ENCODE measurements at regions of chr21 and their contacts with region 1.

Region 1: GRCh38 chr21:36156339-36156814 is 247 bp upstream of the DOP1B start:
- DNase-seq: peak; percentile 99 to 100 (median 100)
- ATAC-seq: peak; percentile 94
- H3K4me3 ChIP-seq: peak overlapping the region; percentile 81
- H3K4me3 Mint-ChIP-seq: peak overlapping the region; percentile 71 to 91 (median 86)
- H3K27ac ChIP-seq: peak overlapping the region; percentile 81
- H3K27ac Mint-ChIP-seq: peak overlapping the region in 8 of 9 donors; percentile 46 to 88 (median 58)
- H3K4me1 ChIP-seq: peaks cover 11% of the 10 kb centered on the region in 2 donors
- H3K4me1 Mint-ChIP-seq: peaks cover 11 to 45% (median 33%) of the 10 kb centered on the region in 7 donors
- H3K27me3 ChIP-seq: no peaks in the 10 kb centered on the region
- H3K27me3 Mint-ChIP-seq: peaks cover 0 to 13% (median 0%) of the 10 kb centered on the region in 5 donors

Region 2: DNA sequence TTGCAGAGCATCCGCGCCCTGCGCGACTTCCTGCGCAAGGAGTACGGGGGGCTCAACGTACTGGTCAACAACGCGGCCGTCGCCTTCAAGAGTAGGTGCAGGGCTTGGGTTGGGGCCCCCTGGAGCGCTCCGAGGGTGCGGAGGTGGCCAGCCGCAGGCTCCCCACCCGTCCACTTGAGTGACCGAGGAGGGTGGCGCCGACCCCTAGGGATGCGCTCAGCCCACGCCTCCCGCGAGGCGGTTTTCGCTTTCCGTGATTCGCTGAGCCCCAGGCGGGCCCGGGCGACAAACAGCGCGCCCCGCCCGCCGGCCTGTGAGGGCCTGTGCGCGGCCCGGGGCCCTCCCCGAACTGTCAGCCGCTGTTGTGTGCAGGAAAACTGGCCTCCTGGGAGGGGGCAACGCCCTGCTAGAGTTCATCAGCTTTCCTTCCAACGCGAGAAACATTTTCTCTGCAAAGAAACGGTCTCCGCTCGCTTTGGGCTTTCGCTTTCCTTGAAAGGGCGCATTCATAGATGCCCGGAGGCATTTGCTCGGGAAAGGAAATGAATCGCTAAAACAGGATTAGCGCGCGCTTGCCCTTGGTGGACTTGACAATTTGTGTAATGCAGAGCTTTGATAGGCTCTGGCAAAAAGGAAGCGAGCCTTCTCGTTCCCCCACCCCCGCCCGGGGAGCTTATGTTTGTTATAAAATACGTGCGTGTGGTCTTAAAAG is 20.8 kb before region 1 on chr21:
- CTCF ChIA-PET with region 1: interaction called, 26 read pairs
- POLR2A ChIA-PET with region 1: interaction called, 7 read pairs
- intact Hi-C with region 1: loop called (anchors 1 kb)
- DNase-seq: peak; percentile 25 to 76 (median 41)
- ATAC-seq: peak; percentile 84
- H3K4me3 ChIP-seq: peak overlapping the region; percentile 81
- H3K4me3 Mint-ChIP-seq: peak overlapping the region; percentile 83 to 98 (median 92)
- H3K27ac ChIP-seq: peak overlapping the region; percentile 58
- H3K27ac Mint-ChIP-seq: peak overlapping the region; percentile 79 to 94 (median 88)
- H3K4me1 ChIP-seq: peaks cover 4 to 13% of the 10 kb centered on the region in 2 donors
- H3K4me1 Mint-ChIP-seq: peaks cover 11 to 33% (median 26%) of the 10 kb centered on the region in 7 donors
- H3K27me3 ChIP-seq: no peaks in the 10 kb centered on the region
- H3K27me3 Mint-ChIP-seq: no peaks in the 10 kb centered on the region

Region 3: DNA sequence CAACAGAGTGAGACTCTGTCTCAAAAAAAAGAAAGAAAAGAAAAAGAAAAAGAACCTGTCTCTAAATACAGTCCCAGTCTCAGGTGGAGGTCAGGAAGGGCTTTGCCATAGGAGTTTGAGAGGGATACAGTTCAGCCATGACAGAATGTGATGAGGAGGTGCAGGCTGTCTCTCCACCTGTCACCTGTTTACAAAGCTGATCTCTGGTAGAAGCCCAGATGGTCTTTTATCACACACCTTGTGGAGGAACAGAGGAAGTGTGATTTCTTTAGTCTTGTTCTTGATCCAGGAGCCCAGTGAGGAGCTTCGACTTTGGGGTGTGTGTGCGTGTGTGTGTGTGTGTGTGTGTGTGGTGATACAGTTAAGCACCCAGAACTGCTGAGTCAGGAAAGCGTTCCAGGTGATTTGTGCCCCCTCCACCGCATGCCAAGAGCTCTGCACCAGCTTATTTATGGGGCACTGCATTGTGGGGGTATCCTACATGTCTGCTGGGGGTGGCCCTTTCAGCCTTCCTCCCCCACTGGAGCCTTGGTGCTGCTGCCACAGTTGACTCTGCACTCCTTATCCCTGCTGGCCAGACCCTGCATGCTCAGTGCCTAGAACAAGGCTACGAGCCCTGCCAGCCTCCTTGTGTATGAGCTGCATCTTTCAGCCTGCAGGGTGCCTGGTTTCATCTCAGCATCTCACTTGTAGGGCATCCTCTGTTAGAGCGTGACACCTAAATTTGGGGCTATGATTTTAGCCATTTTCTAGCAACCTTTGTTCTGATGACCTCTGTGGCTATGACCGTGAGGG is 19.6 kb after region 1 on chr21:
- CTCF ChIA-PET with region 1: interaction called, 15 read pairs
- POLR2A ChIA-PET with region 1: interaction called, 7 read pairs
- intact Hi-C with region 1: loop called (anchors 1 kb)
- DNase-seq: peak in 5 of 9 donors; percentile 3 to 33 (median 14)
- ATAC-seq: peak; percentile 30
- H3K4me3 ChIP-seq: no peak overlapping the region
- H3K4me3 Mint-ChIP-seq: peak overlapping the region in 2 of 10 donors; percentile 12 to 16
- H3K27ac ChIP-seq: no peak overlapping the region
- H3K27ac Mint-ChIP-seq: peak overlapping the region in 8 of 9 donors; percentile 42 to 87 (median 84)
- H3K4me1 ChIP-seq: peaks cover 9 to 14% of the 10 kb centered on the region in 2 donors
- H3K4me1 Mint-ChIP-seq: peaks cover 7 to 33% (median 24%) of the 10 kb centered on the region in 7 donors
- H3K27me3 ChIP-seq: no peaks in the 10 kb centered on the region
- H3K27me3 Mint-ChIP-seq: no peaks in the 10 kb centered on the region

Region 4: GRCh38 chr21:36288651-36289243 is 132.4 kb after region 1 on chr21:
- CTCF ChIA-PET with region 1: no interaction called
- POLR2A ChIA-PET with region 1: interaction called, 8 read pairs
- intact Hi-C with region 1: loop called in 1 of 2 experiments (anchors 1 kb)
- DNase-seq: peak in 6 of 9 donors; percentile 55 to 77 (median 68)
- ATAC-seq: peak; percentile 87
- H3K4me3 ChIP-seq: peak overlapping the region; percentile 40
- H3K4me3 Mint-ChIP-seq: peak overlapping the region; percentile 56 to 90 (median 80)
- H3K27ac ChIP-seq: peak overlapping the region; percentile 96
- H3K27ac Mint-ChIP-seq: peak overlapping the region; percentile 94 to 100 (median 98)
- H3K4me1 ChIP-seq: peaks cover 7 to 9% of the 10 kb centered on the region in 2 donors
- H3K4me1 Mint-ChIP-seq: peaks cover 6 to 30% (median 23%) of the 10 kb centered on the region in 7 donors
- H3K27me3 ChIP-seq: no peaks in the 10 kb centered on the region
- H3K27me3 Mint-ChIP-seq: peaks cover 0 to 3% (median 0%) of the 10 kb centered on the region in 5 donors

Region 5: GRCh38 chr21:36330904-36331303 is 174.5 kb after region 1 on chr21:
- CTCF ChIA-PET with region 1: interaction called, 13 read pairs
- POLR2A ChIA-PET with region 1: interaction called, 4 read pairs
- intact Hi-C with region 1: loop called (anchors 1 kb)
- DNase-seq: peak in 7 of 9 donors; percentile 32 to 62 (median 55)
- ATAC-seq: peak; percentile 92
- H3K4me3 ChIP-seq: no peak overlapping the region
- H3K4me3 Mint-ChIP-seq: peak overlapping the region in 7 of 10 donors; percentile 0 to 65 (median 37)
- H3K27ac ChIP-seq: peak overlapping the region; percentile 12
- H3K27ac Mint-ChIP-seq: peak overlapping the region in 8 of 9 donors; percentile 72 to 90 (median 86)
- H3K4me1 ChIP-seq: peaks cover 18 to 23% of the 10 kb centered on the region in 2 donors
- H3K4me1 Mint-ChIP-seq: peaks cover 18 to 74% (median 61%) of the 10 kb centered on the region in 7 donors
- H3K27me3 ChIP-seq: no peaks in the 10 kb centered on the region
- H3K27me3 Mint-ChIP-seq: no peaks in the 10 kb centered on the region

Region 6: DNA sequence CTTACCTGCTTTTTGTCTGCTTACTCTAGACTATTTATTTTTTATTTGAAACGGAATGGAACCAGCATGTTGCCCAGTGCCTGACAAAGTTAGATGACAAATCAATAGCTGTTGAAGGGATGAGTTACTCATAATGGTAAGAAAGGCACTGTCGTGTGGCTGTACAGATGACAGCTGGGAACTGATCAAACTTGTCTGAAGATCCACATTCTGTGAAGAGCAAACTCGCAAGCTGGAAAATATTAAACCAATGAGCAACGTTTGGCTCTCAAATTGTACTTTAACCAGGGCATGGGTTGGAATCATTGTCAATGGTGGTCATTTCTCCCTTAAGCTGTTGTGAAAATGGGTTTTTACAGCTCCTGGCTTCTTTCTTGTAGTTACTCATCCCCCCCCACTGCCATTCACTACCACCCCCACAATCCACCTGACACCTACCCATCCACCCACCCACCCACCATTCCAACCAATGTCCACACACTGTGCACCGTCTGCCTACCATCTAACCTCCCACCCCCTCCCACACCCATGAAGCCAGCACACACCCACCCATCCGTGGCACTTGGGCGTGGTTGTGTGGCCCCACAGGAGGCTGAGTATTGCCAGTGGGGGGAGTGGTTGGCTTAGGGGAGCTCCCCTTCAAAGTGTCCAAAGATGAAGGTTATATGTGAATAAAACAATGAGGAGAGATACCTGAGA is 276.8 kb after region 1 on chr21:
- CTCF ChIA-PET with region 1: no interaction called
- POLR2A ChIA-PET with region 1: no interaction called
- intact Hi-C with region 1: no loop called
- DNase-seq: no peak
- ATAC-seq: no peak
- H3K4me3 ChIP-seq: no peak overlapping the region
- H3K4me3 Mint-ChIP-seq: no peak overlapping the region
- H3K27ac ChIP-seq: no peak overlapping the region
- H3K27ac Mint-ChIP-seq: no peak overlapping the region
- H3K4me1 ChIP-seq: peaks cover 0 to 5% of the 10 kb centered on the region in 2 donors
- H3K4me1 Mint-ChIP-seq: peaks cover 11 to 21% (median 13%) of the 10 kb centered on the region in 7 donors
- H3K27me3 ChIP-seq: no peaks in the 10 kb centered on the region
- H3K27me3 Mint-ChIP-seq: peaks cover 14 to 29% (median 23%) of the 10 kb centered on the region in 5 donors

Region 7: DNA sequence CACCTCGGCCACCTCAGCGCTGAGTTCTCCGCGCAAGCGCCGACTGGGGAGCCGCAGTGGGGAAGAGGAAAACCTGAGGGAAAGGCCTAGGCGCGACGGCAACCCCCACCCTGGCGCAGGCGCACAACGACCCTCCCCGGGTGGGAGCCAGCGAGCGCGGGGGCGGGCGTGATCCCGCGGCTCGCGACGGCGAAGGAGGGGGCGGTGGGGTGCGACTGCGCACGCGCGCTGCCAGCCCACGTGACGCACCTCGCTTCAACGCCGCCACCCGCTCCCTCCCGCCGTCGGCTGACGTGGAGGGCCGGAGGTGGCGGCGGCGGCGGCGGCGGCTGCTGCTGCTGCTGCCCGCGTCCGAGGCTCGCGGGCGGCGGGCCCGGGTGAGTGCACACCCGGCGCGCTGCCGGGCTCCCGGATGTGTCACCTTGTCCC is 916.6 kb after region 1 on chr21 and contains the starts of genes PIGP and TTC3:
- CTCF ChIA-PET with region 1: no interaction called
- POLR2A ChIA-PET with region 1: no interaction called
- intact Hi-C with region 1: loop called in 1 of 2 experiments (anchors 5 kb)
- DNase-seq: peak; percentile 93 to 99 (median 97)
- ATAC-seq: peak; percentile 79
- H3K4me3 ChIP-seq: peak within 1 kb of the TSS; percentile 76
- H3K4me3 Mint-ChIP-seq: peak within 1 kb of the TSS; percentile 88 to 100 (median 98)
- H3K27ac ChIP-seq: peak within 1 kb of the TSS; percentile 97
- H3K27ac Mint-ChIP-seq: peak within 1 kb of the TSS; percentile 91 to 100 (median 97)
- H3K4me1 ChIP-seq: peaks cover 22 to 23% of the 10 kb centered on the region in 2 donors
- H3K4me1 Mint-ChIP-seq: peaks cover 30 to 66% (median 59%) of the 10 kb centered on the region in 7 donors
- H3K27me3 ChIP-seq: no peaks in the 10 kb centered on the region
- H3K27me3 Mint-ChIP-seq: peaks cover 0 to 6% (median 0%) of the 10 kb centered on the region in 5 donors
- total RNA-seq, gene PIGP: 9.1 to 26.7 (median 15.3) TPM
- total RNA-seq, gene TTC3: 66.6 to 208 (median 154) TPM

Region 8: DNA sequence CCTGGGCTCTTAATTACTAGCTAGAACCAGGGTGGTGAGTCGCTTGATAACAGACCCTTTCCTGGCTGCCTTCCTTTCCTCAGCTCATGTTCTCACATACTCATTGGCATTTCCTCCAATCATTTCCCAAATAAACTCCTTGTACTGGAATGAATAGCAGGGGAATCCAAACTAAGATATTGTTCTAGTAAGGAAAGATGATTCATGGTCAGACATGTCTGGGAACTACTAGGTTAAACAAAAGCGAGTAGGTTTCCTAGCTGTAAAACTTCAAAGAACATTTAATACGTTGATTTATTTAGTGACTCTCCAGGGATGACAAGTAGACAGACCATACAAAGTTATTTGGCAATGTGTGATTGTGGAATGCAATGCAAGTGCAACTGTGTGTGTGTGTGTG is 1881.0 kb after region 1 on chr21:
- CTCF ChIA-PET with region 1: no interaction called
- POLR2A ChIA-PET with region 1: no interaction called
- intact Hi-C with region 1: no loop called
- DNase-seq: no peak
- ATAC-seq: no peak
- H3K4me3 ChIP-seq: no peak overlapping the region
- H3K4me3 Mint-ChIP-seq: no peak overlapping the region
- H3K27ac ChIP-seq: no peak overlapping the region
- H3K27ac Mint-ChIP-seq: no peak overlapping the region
- H3K4me1 ChIP-seq: no peaks in the 10 kb centered on the region
- H3K4me1 Mint-ChIP-seq: no peaks in the 10 kb centered on the region
- H3K27me3 ChIP-seq: no peaks in the 10 kb centered on the region
- H3K27me3 Mint-ChIP-seq: peaks cover 4 to 24% (median 16%) of the 10 kb centered on the region in 5 donors